GM12878 (cell line): ENCODE measurements at regions of chr12 and their contacts with region 1.

Region 1: DNA sequence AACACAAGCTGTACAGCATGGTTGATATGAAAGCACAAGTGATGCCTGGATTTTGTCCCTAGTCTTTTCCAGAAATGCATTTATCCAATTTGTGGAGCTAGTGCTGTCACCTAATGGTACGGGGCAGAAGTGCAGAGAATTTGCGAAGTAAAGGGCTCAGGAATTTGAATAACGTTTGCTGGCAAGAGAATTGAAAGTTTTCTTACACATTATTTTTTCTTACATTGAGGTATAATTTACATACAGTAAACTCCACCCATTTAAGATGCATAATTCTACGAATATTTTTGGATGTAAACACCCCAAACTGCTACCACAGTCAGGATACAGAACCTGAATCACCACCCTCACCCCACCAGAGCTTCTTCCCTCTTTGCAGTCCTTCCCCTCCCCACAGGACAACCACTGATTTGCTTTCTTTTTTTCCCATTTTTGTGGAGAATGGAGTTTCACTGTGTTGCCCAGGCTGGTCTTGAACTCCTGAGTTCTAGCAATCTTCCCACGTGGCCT is 3.5 kb downstream of the AICDA start:
- DNase-seq: no peak
- ATAC-seq: peak; percentile 16
- H3K4me3 ChIP-seq: peak overlapping the region; percentile 51
- H3K27ac ChIP-seq: peak overlapping the region; percentile 39
- H3K4me1 ChIP-seq: peaks cover 30% of the 10 kb centered on the region
- H3K27me3 ChIP-seq: no peaks in the 10 kb centered on the region
- CTCF ChIP-seq: peak; percentile 71 to 86 (median 86)
- EP300 ChIP-seq: no peak
- POLR2A ChIP-seq: peak; percentile 51; the same call in 1 of the 2 replicates
- RAD21 ChIP-seq: peak; percentile 75

Region 2: GRCh38 chr12:8590842-8591550 is 18.1 kb before region 1 on chr12:
- CTCF ChIA-PET with region 1: interaction called, 60 read pairs
- POLR2A ChIA-PET with region 1: interaction called, 8 read pairs
- RAD21 ChIA-PET with region 1: interaction called, 19 read pairs
- SMC1A ChIA-PET with region 1: interaction called, 23 read pairs
- in situ Hi-C with region 1: no loop called
- intact Hi-C with region 1: no loop called
- DNase-seq: no peak
- ATAC-seq: peak; percentile 99
- H3K4me3 ChIP-seq: 0 out of 2 replicates have a peak overlapping the region, but pooled peaks have one; percentile 36
- H3K27ac ChIP-seq: no peak overlapping the region
- H3K4me1 ChIP-seq: peaks cover 3% of the 10 kb centered on the region; the same call in 1 of the 2 replicates
- H3K27me3 ChIP-seq: no peaks in the 10 kb centered on the region
- CTCF ChIP-seq: peak; percentile 18 to 25 (median 23); a peak in 2 of 6 replicates
- EP300 ChIP-seq: no peak
- POLR2A ChIP-seq: no peak
- RAD21 ChIP-seq: no peak

Region 3: DNA sequence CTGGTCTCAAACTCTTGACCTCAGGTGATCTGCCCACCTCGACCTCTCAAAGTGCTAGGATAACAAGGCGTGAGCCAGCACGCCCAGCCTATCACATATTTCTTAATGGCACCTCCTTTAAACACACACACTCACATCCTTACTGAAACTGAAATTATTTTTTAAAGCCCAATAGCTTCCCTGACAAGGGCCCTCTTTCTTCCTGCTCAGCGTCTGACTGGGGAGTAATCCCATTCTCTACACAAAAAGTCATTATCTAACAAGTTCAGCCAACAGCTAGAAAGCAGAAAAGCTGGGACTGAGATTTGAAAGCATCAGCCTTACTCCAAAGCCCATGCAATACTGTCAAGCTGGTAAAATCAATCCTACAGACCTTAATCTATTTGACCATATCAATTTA is 13.5 kb after region 1 on chr12:
- CTCF ChIA-PET with region 1: interaction called, 57 read pairs
- POLR2A ChIA-PET with region 1: interaction called, 17 read pairs
- RAD21 ChIA-PET with region 1: interaction called, 81 read pairs
- SMC1A ChIA-PET with region 1: interaction called, 80 read pairs
- in situ Hi-C with region 1: no loop called
- intact Hi-C with region 1: no loop called
- DNase-seq: no peak
- ATAC-seq: peak; percentile 16; the same call in 1 of the 3 replicates
- H3K4me3 ChIP-seq: no peak overlapping the region
- H3K27ac ChIP-seq: no peak overlapping the region
- H3K4me1 ChIP-seq: peaks cover 10% of the 10 kb centered on the region; the same call in 1 of the 2 replicates
- H3K27me3 ChIP-seq: no peaks in the 10 kb centered on the region
- CTCF ChIP-seq: no peak
- EP300 ChIP-seq: no peak
- POLR2A ChIP-seq: no peak
- RAD21 ChIP-seq: no peak

Region 4: GRCh38 chr12:8644345-8645248 is 35.5 kb after region 1 on chr12:
- CTCF ChIA-PET with region 1: interaction called, 97 read pairs
- POLR2A ChIA-PET with region 1: interaction called, 19 read pairs
- RAD21 ChIA-PET with region 1: interaction called, 38 read pairs
- SMC1A ChIA-PET with region 1: interaction called, 45 read pairs
- in situ Hi-C with region 1: no loop called
- intact Hi-C with region 1: loop called (anchors 1 kb)
- DNase-seq: peak; percentile 90
- ATAC-seq: peak; percentile 84
- H3K4me3 ChIP-seq: peak overlapping the region; percentile 49; the same call in 1 of the 2 replicates
- H3K27ac ChIP-seq: peak overlapping the region; percentile 97
- H3K4me1 ChIP-seq: peaks cover 41% of the 10 kb centered on the region
- H3K27me3 ChIP-seq: no peaks in the 10 kb centered on the region
- CTCF ChIP-seq: no peak
- EP300 ChIP-seq: peak; percentile 92 to 95
- POLR2A ChIP-seq: peak; percentile 59
- RAD21 ChIP-seq: no peak

Region 5: GRCh38 chr12:8662593-8662992 is 53.5 kb after region 1 on chr12 and contains the start of gene MFAP5:
- CTCF ChIA-PET with region 1: interaction called, 17 read pairs
- POLR2A ChIA-PET with region 1: no interaction called
- RAD21 ChIA-PET with region 1: interaction called, 7 read pairs
- SMC1A ChIA-PET with region 1: interaction called, 20 read pairs
- in situ Hi-C with region 1: no loop called
- intact Hi-C with region 1: no loop called
- DNase-seq: no peak
- ATAC-seq: no peak
- H3K4me3 ChIP-seq: no peak within 1 kb of the TSS
- H3K27ac ChIP-seq: no peak within 1 kb of the TSS
- H3K4me1 ChIP-seq: no peaks in the 10 kb centered on the region
- H3K27me3 ChIP-seq: peaks cover 0 to 5% of the 10 kb centered on the region in 2 experiments; a peak in 2 of 4 replicates
- CTCF ChIP-seq: no peak
- EP300 ChIP-seq: no peak
- POLR2A ChIP-seq: no peak
- RAD21 ChIP-seq: no peak
- polyA plus RNA-seq, gene MFAP5: not detected

Region 6: DNA sequence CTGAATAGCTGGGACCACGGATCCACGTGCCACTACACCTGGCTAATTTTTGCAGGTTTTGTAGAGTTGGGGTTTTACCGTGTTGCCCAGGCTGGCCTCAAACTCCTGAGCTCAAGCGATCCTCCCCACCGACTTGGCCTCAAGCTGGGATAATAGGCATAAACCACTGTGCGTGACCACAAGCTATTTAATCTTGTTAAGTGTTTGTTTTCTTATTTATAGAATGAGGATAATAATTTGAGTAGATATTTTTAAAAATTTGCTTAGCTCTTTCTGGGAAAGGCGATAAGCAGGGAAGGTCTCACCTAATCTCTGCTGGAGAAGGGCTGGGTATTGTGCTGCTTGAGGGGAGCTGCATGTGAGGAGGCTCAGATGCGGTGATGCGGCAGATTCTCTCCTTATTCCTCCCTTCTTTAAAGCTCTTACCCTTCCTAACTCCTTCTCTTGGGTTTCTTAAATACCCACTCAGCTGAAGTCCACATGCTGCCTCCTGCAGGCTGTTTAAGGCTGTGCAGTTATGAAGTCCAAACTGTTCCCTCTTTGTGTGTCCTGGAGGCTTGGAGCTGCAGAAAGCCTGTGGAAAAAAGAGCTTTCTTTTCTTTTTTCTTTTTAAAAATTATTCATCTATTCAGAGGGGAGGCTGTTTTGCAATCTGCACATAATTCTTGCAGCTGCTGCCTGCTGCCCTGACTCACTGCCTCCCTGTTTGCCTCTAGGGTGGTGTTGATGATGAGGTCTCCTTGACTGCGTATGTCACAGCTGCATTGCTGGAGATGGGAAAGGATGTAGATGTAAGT is 251.2 kb after region 1 on chr12:
- CTCF ChIA-PET with region 1: interaction called, 10 read pairs
- POLR2A ChIA-PET with region 1: no interaction called
- RAD21 ChIA-PET with region 1: no interaction called
- SMC1A ChIA-PET with region 1: no interaction called
- in situ Hi-C with region 1: no loop called
- intact Hi-C with region 1: no loop called
- DNase-seq: no peak
- ATAC-seq: peak; percentile 60; the same call in 2 of the 3 replicates
- H3K4me3 ChIP-seq: no peak overlapping the region
- H3K27ac ChIP-seq: no peak overlapping the region
- H3K4me1 ChIP-seq: no peaks in the 10 kb centered on the region
- H3K27me3 ChIP-seq: 0 out of 4 replicates have a peak, but pooled peaks cover 0 to 3% of the 10 kb centered on the region in 2 experiments
- CTCF ChIP-seq: peak; percentile 51 to 67 (median 55)
- EP300 ChIP-seq: no peak
- POLR2A ChIP-seq: no peak
- RAD21 ChIP-seq: peak; percentile 63